MCF 10A (cell line): ENCODE measurements at regions of chr11 and their contacts with region 1.

Region 1: DNA sequence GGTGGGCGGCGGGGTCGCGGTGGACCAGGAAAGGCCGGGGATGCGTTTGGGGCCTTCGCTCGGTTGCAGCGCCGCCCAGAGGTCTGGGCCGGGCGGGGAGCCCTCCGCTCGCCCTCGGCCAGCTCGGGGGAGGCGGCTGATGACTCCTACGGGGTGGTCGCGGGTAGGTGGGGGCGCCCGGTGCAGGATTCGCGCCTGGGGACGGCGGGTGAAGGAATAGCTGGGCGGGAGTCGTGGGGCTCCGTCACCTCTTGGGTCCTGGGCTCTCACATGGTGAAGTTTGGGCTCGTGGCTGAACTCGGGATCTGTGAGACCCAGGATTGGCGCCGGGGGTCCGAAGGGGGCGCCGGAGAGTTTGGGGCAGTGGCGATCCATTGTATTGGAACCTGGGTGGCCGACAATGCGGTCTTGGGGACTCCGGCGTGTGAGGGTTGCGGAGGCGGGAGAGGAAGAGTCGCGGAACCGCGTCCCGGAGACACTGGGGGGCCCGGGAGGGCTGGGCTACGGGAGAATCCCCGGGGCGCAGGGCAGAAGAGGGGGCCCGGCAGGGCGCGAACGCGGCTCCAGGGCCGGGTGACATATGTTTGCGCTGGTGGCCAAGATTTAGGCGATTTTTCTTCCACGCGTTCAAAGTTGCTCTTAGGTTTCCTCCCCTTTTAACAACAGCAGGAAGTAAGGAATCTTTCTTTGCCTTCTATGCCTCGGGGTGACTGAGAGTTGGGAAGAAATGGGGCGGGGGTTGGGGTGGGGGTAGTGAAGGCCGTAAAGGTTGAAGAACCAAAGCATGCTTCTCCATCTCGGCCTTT is 935 bp downstream of the QSER1 start:
- DNase-seq: peak; percentile 39
- H3K4me3 Mint-ChIP-seq: peak overlapping the region; percentile 97
- H3K27ac Mint-ChIP-seq: peak overlapping the region; percentile 89
- H3K4me1 Mint-ChIP-seq: peaks cover 24% of the 10 kb centered on the region
- H3K27me3 Mint-ChIP-seq: no peaks in the 10 kb centered on the region
- CTCF ChIP-seq: peak; percentile 39

Region 2: GRCh38 chr11:32809313-32809712 is 84.2 kb before region 1 on chr11:
- CTCF ChIA-PET with region 1: interaction called, 8 read pairs
- POLR2A ChIA-PET with region 1: interaction called, 27 read pairs
- intact Hi-C with region 1: loop called (anchors 1 kb)
- DNase-seq: peak; percentile 82
- H3K4me3 Mint-ChIP-seq: no peak overlapping the region
- H3K27ac Mint-ChIP-seq: no peak overlapping the region
- H3K4me1 Mint-ChIP-seq: no peaks in the 10 kb centered on the region
- H3K27me3 Mint-ChIP-seq: no peaks in the 10 kb centered on the region
- CTCF ChIP-seq: peak; percentile 83

Region 3: DNA sequence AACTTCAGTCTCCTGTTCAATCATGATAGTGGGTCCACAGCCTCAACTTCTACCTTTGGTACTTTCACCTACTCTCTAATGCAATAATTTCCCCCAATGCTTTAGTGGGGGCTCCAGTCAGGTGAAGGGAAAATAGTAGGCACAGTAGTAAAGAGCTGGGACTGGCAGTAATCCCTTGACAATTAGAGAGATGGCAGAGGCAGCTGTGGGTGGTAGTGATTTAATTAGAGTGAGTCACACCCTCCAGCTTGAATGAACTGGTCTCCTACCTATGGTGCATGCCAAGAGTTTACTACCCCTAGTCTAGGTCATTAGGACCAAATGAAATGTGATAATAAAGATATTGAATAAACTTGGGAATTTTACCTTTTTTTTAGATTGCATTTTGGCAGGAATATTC is 55.0 kb before region 1 on chr11:
- CTCF ChIA-PET with region 1: interaction called, 6 read pairs
- POLR2A ChIA-PET with region 1: interaction called, 76 read pairs
- intact Hi-C with region 1: no loop called
- DNase-seq: peak; percentile 87
- H3K4me3 Mint-ChIP-seq: no peak overlapping the region
- H3K27ac Mint-ChIP-seq: no peak overlapping the region
- H3K4me1 Mint-ChIP-seq: no peaks in the 10 kb centered on the region
- H3K27me3 Mint-ChIP-seq: no peaks in the 10 kb centered on the region
- CTCF ChIP-seq: no peak

Region 4: DNA sequence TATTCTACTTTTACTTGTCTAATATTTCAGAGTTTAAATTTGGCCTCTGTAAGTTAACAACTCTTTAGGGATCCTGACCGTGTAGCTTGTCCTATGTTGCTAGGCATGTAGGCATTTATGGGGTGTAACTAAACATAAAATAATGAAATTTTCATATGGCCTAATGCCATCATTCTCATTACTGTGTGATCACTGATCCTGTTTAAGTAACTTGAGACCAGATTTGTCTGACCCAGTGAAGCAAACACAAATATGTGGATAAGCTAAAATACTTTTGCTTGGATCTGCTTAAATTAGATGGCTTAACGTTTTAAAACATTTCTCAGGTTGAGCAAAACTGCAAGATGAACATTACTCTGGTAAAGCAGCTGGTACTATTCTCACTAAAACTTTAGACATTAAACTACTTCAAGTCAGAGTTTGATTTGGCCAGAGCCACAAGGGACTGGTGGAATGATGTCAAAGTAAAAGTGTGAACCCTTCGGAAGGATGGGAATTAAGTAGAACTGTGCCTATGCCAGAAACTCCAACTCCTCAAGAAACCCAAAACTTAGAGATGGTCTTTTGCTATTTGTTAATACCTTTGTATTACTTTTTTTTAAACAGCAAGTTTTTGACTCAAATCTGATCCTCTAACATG is 11.6 kb after region 1 on chr11:
- CTCF ChIA-PET with region 1: interaction called, 4 read pairs
- POLR2A ChIA-PET with region 1: interaction called, 13 read pairs
- intact Hi-C with region 1: no loop called
- DNase-seq: no peak
- H3K4me3 Mint-ChIP-seq: no peak overlapping the region
- H3K27ac Mint-ChIP-seq: peak overlapping the region; percentile 31
- H3K4me1 Mint-ChIP-seq: peaks cover 23% of the 10 kb centered on the region
- H3K27me3 Mint-ChIP-seq: no peaks in the 10 kb centered on the region
- CTCF ChIP-seq: no peak